Calu3 (cell line): ENCODE measurements at regions of chr1 and their contacts with region 1.

Region 1: GRCh38 chr1:69700770-69701169 is 133.0 kb downstream of the LRRC7 start:
- DNase-seq: peak; percentile 60
- H3K4me3 Mint-ChIP-seq: no peak overlapping the region
- H3K27ac Mint-ChIP-seq: no peak overlapping the region
- H3K4me1 Mint-ChIP-seq: peaks cover 5% of the 10 kb centered on the region
- H3K27me3 Mint-ChIP-seq: no peaks in the 10 kb centered on the region
- CTCF ChIP-seq: peak; percentile 38

Region 2: GRCh38 chr1:69377507-69377906 is 323.3 kb before region 1 on chr1:
- CTCF ChIA-PET with region 1: no interaction called
- intact Hi-C with region 1: loop called (anchors 10 kb)
- DNase-seq: no peak
- H3K4me3 Mint-ChIP-seq: no peak overlapping the region
- H3K27ac Mint-ChIP-seq: no peak overlapping the region
- H3K4me1 Mint-ChIP-seq: no peaks in the 10 kb centered on the region
- H3K27me3 Mint-ChIP-seq: no peaks in the 10 kb centered on the region
- CTCF ChIP-seq: no peak

Region 3: GRCh38 chr1:69777971-69778370 is 77.2 kb after region 1 on chr1:
- CTCF ChIA-PET with region 1: no interaction called
- intact Hi-C with region 1: no loop called
- DNase-seq: no peak
- H3K4me3 Mint-ChIP-seq: no peak overlapping the region
- H3K27ac Mint-ChIP-seq: peak overlapping the region; percentile 6
- H3K4me1 Mint-ChIP-seq: peaks cover 18% of the 10 kb centered on the region
- H3K27me3 Mint-ChIP-seq: no peaks in the 10 kb centered on the region
- CTCF ChIP-seq: no peak